Endothelial cell of umbilical vein (primary cell): ENCODE measurements at regions of chr4 and their contacts with region 1.

Region 1: DNA sequence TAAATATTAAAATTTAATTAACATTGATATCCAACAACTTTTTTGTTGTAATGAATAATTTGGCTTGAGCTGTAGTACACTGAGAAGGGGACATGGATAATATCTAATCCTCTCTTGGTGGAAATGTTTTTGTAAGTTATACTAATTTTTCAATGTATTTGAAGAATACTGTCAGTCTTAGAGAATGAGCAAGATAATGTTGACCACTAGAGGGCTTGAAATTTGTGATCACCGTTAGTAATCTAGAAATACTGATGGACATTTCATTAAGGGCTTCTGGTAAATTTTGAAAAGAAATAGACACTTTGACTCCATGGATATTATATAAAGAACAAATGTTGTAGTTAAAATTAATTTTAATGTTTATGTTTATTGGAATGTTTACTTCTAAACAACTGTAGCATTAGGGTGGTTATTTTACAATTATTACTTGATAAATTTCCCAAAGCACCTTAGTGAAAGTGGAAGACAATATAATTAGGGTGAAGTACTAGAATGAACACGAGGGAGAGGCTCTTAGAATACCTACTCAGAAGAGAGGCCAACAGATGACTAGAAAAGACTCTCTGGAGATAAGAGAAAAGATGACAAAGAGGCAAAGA is 20.0 kb upstream of the CAMK2D start:
- DNase-seq: peak; percentile 58
- H3K4me3 ChIP-seq: no peak overlapping the region
- H3K27ac ChIP-seq: no peak overlapping the region
- H3K4me1 ChIP-seq: peaks cover 19% of the 10 kb centered on the region
- H3K27me3 ChIP-seq: no peaks in the 10 kb centered on the region
- CTCF ChIP-seq: peak; percentile 32 to 40
- POLR2A ChIP-seq: no peak

Region 2: DNA sequence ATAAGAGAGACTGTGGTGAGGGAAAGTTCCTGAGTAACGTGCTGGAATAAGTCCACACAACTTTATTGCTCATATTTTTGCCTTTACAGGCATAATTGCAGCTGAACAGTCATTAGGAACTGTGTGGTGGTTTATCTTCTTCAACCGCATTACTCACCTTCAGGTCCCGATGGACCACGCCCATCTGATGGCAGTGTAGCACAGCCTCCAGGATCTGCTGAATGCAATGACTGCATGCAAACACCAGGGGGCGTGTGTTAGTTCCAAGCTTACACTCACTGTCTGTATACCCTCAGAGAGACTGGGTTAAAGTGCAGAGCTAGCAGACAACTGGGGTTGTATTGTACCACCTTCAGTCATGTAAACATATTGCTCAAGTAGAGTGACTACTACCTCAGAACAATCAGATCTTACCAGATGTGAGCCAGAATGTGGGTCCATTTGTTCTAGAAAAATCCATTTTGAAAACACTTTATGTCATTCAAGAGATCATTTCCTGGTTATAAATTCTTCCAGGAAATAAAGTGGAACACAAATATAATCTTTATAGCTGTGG is 234.0 kb before region 1 on chr4:
- CTCF ChIA-PET with region 1: interaction called, 11 read pairs
- POLR2A ChIA-PET with region 1: no interaction called
- dilution Hi-C with region 1: no loop called
- intact Hi-C with region 1: loop called (anchors 1 kb)
- DNase-seq: peak; percentile 96
- H3K4me3 ChIP-seq: no peak overlapping the region
- H3K27ac ChIP-seq: peak overlapping the region; percentile 4
- H3K4me1 ChIP-seq: peaks cover 3% of the 10 kb centered on the region
- H3K27me3 ChIP-seq: no peaks in the 10 kb centered on the region
- CTCF ChIP-seq: peak; percentile 92 to 98
- POLR2A ChIP-seq: no peak

Region 3: DNA sequence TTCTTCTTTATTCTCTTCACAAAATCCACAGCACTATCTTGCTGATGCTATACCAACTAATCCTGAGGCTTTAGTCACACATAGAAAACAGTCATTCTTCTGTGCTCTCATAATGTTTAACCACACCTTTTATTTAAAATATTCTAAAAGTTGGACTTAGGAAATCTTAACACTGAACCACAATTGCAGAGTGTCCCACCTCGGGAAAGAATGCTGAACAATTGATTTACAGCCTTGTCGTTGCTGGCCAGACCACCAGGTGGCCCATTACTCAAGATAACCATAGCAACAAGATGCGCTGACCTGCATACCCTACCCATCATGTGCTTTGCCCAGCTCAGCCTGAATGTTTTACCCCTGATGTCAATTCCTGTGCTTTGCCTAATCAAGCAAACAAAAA is 97.1 kb after region 1 on chr4:
- CTCF ChIA-PET with region 1: interaction called, 3 read pairs
- POLR2A ChIA-PET with region 1: interaction called, 3 read pairs
- dilution Hi-C with region 1: no loop called
- intact Hi-C with region 1: loop called (anchors 5 kb)
- DNase-seq: peak; percentile 40
- H3K4me3 ChIP-seq: no peak overlapping the region
- H3K27ac ChIP-seq: no peak overlapping the region
- H3K4me1 ChIP-seq: peaks cover 16% of the 10 kb centered on the region
- H3K27me3 ChIP-seq: no peaks in the 10 kb centered on the region
- CTCF ChIP-seq: peak; percentile 25 to 30
- POLR2A ChIP-seq: no peak

Region 4: DNA sequence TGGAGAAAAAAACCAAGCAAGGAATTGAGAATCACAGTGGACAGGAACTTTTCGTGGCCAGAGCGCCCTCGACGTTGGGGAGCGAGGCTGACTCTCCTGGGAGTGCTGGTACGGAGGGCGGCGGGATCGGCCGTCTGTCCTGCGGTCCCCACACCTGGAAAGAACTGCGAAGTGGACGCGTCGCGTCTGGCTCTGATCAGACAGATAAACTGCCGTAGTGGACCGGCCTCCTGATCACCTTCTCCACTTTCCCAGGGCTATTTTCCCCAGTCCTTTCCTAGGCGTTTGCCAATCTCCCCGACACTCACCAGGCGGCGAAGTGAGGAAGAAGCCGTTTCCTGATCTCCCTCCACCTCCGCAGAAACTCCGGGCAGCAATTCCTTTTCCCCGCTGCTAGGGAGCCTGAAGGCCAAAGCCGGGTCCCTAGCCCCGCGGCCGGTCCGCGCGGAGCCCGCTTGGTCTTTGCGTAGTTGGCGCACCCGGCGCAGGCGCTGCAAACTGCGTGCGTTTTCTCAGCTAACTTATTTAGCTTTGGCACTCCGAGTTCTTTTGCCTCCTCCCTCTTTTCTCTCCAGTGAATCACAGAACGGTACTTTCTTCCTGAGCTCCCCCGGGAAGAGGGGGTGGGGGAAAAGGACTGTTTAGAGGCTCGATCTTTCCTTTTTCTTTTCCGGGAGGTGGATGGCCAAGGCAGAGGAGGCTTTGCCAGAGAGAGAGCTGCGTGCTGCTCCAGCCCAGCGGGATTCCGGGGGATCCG is 197.8 kb after region 1 on chr4 and contains the start of gene ARSJ:
- CTCF ChIA-PET with region 1: interaction called, 5 read pairs
- POLR2A ChIA-PET with region 1: no interaction called
- dilution Hi-C with region 1: no loop called
- intact Hi-C with region 1: loop called (anchors 1 kb)
- DNase-seq: peak; percentile 82
- H3K4me3 ChIP-seq: peak within 1 kb of the TSS; percentile 92 to 98 (median 97)
- H3K27ac ChIP-seq: peak within 1 kb of the TSS; percentile 92
- H3K4me1 ChIP-seq: peaks cover 12% of the 10 kb centered on the region
- H3K27me3 ChIP-seq: no peaks in the 10 kb centered on the region
- CTCF ChIP-seq: peak in 1 of 2 donors; percentile 3
- POLR2A ChIP-seq: peak; percentile 86
- total RNA-seq, gene ARSJ: 44.0 and 50.0 TPM in 2 replicates

Region 5: DNA sequence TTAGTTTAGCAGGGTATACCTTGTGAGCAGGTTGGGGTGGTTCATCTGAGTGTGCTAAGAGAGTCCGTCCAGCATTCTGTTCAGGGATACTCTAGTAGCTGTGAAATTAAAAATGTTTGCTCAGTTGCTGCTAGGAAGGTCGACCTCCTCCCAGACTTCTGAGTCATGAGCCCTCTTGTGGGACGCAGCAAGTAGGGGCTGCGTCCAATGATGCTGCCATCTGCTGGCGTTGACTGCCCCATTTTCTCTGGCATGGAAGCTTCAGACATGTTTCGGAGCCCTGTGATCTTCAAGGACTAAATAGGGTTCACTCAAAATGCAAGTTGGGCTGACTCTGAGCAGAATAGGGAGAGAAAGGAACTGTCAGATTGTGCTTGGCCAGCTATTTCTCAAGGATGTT is 398.9 kb after region 1 on chr4:
- CTCF ChIA-PET with region 1: interaction called, 5 read pairs
- POLR2A ChIA-PET with region 1: no interaction called
- dilution Hi-C with region 1: no loop called
- intact Hi-C with region 1: loop called (anchors 1 kb)
- DNase-seq: peak; percentile 87
- H3K4me3 ChIP-seq: no peak overlapping the region
- H3K27ac ChIP-seq: no peak overlapping the region
- H3K4me1 ChIP-seq: no peaks in the 10 kb centered on the region
- H3K27me3 ChIP-seq: no peaks in the 10 kb centered on the region
- CTCF ChIP-seq: peak; percentile 69 to 79
- POLR2A ChIP-seq: no peak

Region 6: DNA sequence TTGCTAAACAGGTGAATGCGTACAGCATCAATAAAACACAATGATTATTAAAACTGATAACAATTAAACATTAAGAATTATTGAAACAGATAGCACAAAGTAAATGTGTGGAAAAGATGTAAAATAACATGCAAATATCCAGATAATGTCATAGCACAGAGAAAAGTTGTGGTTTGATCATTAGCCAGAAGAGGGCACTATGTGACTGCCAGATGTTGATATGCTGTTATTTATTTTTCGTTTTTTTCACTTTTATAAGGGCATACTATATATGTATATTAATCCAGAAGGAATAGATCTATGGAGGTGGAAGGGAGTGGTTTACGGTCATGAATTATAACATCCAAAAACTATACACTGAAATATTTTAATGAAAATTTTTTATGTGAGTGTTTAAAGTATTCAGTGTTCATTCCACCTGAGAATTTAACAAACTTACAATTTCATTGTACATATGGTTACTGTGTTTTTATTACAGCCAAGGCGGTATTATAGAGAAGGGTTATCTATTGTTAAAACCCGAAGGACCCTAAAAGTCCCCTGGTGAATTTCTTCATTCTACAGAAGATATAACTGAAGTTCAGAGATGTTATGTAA is 605.2 kb after region 1 on chr4:
- CTCF ChIA-PET with region 1: interaction called, 10 read pairs
- POLR2A ChIA-PET with region 1: no interaction called
- dilution Hi-C with region 1: no loop called
- intact Hi-C with region 1: loop called (anchors 2 kb)
- DNase-seq: peak; percentile 59
- H3K4me3 ChIP-seq: no peak overlapping the region
- H3K27ac ChIP-seq: no peak overlapping the region
- H3K4me1 ChIP-seq: no peaks in the 10 kb centered on the region
- H3K27me3 ChIP-seq: peaks cover 5 to 11% of the 10 kb centered on the region in 2 experiments
- CTCF ChIP-seq: peak; percentile 37 to 50
- POLR2A ChIP-seq: no peak